ENCODE measurements at regions of chr7 and their contacts with region 1.

Region 1: GRCh38 chr7:43454936-43455518 is 127.9 kb upstream of the STK17A start:
- DNase-seq: no peak
- ATAC-seq: no peak

Region 2: GRCh38 chr7:42981615-42982014 is 473.4 kb before region 1 on chr7:
- intact Hi-C with region 1: no loop called
- DNase-seq: no peak
- ATAC-seq: no peak

Region 3: DNA sequence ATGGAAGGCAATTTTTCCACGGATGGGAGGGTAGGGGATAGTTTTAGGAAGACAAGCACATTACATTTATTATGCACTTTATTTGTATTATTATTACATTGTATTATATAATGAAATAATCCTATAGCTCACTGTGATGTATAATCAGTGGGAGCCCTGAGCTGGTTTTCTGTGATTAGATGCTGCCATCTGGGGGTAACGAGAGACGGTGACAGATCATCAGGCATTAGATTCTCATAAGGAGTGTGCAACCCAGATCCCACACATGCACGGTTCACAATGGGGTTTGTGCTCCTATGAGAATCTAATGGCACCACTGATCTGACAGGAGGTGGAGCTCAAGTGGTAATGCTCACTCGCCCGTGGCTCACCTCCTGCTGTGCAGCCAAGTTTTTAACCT is 24.0 kb after region 1 on chr7:
- intact Hi-C with region 1: no loop called
- DNase-seq: no peak
- ATAC-seq: no peak

Region 4: GRCh38 chr7:43721193-43721806 is 266.3 kb after region 1 on chr7:
- intact Hi-C with region 1: loop called (anchors 5 kb)
- DNase-seq: no peak
- ATAC-seq: no peak

Region 5: DNA sequence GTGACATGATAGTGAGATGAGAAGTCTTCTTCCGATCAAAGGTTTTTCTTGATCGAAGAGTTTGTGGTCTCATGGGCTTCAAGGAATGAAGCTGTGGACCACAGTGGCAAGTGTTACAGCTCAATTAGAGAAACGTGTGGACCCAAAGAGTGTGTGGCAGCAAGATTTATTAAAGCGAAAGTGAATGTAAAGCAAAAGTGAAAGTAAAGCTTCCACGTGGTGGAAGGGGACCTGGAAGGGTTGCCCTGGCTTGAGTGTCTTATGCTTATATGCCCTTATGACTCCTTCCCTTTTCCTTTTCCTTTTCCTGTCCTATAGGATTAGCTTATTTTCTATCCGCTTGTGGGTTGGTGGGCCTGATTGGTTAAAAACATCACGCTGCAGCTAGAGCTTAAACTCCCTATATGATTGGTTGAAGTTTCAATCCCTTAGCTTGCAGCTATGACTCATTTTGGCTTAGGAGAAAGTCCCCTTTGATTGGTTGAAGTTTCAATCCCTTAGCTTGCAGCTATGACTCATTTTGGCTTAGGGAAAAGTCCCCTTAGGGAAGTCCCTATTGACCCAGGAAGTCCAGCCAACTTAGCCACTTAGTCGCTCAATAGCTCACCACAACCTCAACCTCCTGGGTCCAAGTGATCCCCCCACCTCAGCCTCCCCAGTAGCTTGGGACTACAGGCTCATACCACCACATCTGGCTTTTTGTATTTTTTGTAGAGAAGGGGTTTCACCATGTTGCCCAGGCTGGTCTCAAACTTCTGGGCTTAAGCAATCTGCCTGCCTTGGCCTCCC is 379.6 kb after region 1 on chr7:
- intact Hi-C with region 1: loop called (anchors 10 kb)
- DNase-seq: no peak
- ATAC-seq: no peak

Measured in Right ventricle myocardium inferior (tissue), 1 donor.